Esophagus muscularis mucosa (tissue), 4 donors: ENCODE measurements at regions of chrX and their contacts with region 1.

Region 1: GRCh38 chrX:11381464-11381863 is 88.3 kb downstream of the AMELX start:
- DNase-seq: no peak
- H3K4me3 ChIP-seq: no peak overlapping the region
- H3K27ac ChIP-seq: peak overlapping the region in 3 of 4 donors; percentile 22 to 47 (median 42)
- H3K4me1 ChIP-seq: peaks cover 6 to 30% (median 13%) of the 10 kb centered on the region in 4 donors
- H3K27me3 ChIP-seq: no peaks in the 10 kb centered on the region
- CTCF ChIP-seq: peak; percentile 54 to 63 (median 56)
- EP300 ChIP-seq: no peak
- POLR2A ChIP-seq: no peak

Region 2: DNA sequence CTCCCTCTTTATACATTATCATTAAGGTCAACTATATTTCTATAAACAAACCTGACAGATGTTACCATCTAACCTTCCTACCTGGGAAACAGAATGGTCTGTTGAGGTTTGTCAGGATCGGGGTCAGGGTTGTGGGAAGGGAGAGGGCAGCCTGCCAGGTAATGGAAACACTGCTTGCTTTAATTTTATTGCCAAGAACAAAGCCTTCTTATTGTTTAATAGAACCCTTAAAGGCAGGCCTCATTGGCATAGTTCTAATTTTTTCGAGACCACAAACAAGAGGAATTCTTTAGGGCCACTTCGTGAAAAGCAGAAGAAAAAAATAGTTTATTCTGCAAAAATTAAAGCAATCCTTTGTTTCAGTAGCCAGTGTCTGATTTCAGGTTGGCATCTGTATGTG is 874.3 kb before region 1 on chrX:
- intact Hi-C with region 1: no loop called
- DNase-seq: no peak
- H3K4me3 ChIP-seq: no peak overlapping the region
- H3K27ac ChIP-seq: no peak overlapping the region
- H3K4me1 ChIP-seq: peaks cover 0 to 36% (median 24%) of the 10 kb centered on the region in 4 donors
- H3K27me3 ChIP-seq: no peaks in the 10 kb centered on the region
- CTCF ChIP-seq: no peak
- EP300 ChIP-seq: no peak
- POLR2A ChIP-seq: no peak

Region 3: DNA sequence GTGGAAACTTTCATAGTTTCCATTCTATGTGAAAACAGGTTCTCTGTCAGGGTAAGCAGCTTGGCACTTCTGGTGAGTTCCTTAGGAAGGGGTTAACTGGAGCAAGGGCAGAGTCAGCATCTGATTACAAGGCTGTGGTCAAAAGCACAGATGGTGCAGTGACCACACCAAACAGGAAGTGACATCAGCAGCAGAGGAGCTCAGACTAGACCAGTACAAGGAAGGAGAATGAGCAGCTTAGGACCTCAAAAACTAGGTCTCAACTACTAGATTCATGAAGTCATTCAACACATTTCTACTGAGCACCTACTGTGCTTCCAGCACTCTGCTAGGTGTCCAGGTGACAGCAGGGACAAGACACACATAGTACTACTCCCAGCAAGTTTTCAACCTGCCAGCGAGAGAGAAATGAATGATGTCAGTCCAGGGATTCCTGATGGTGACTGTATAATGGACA is 41.9 kb after region 1 on chrX:
- intact Hi-C with region 1: no loop called
- DNase-seq: no peak
- H3K4me3 ChIP-seq: no peak overlapping the region
- H3K27ac ChIP-seq: peak overlapping the region; percentile 5 to 86 (median 48)
- H3K4me1 ChIP-seq: peaks cover 4 to 68% (median 41%) of the 10 kb centered on the region in 4 donors
- H3K27me3 ChIP-seq: no peaks in the 10 kb centered on the region
- CTCF ChIP-seq: no peak
- EP300 ChIP-seq: no peak
- POLR2A ChIP-seq: no peak

Region 4: GRCh38 chrX:11437642-11438379 is 56.3 kb after region 1 on chrX:
- intact Hi-C with region 1: loop called (anchors 10 kb)
- DNase-seq: no peak
- H3K4me3 ChIP-seq: no peak overlapping the region
- H3K27ac ChIP-seq: peak overlapping the region; percentile 63 to 73 (median 68)
- H3K4me1 ChIP-seq: peaks cover 0 to 56% (median 36%) of the 10 kb centered on the region in 4 donors
- H3K27me3 ChIP-seq: no peaks in the 10 kb centered on the region
- CTCF ChIP-seq: no peak
- EP300 ChIP-seq: no peak
- POLR2A ChIP-seq: no peak